Activated CD4-positive, alpha-beta T cell treated with anti-CD3 and anti-CD28 coated beads, Interleukin-2, amount 10 ng/mL, durations not matched to agents 24 days and 14 days (primary cell): ENCODE measurements at regions of chr1 and their contacts with region 1.

Region 1: DNA sequence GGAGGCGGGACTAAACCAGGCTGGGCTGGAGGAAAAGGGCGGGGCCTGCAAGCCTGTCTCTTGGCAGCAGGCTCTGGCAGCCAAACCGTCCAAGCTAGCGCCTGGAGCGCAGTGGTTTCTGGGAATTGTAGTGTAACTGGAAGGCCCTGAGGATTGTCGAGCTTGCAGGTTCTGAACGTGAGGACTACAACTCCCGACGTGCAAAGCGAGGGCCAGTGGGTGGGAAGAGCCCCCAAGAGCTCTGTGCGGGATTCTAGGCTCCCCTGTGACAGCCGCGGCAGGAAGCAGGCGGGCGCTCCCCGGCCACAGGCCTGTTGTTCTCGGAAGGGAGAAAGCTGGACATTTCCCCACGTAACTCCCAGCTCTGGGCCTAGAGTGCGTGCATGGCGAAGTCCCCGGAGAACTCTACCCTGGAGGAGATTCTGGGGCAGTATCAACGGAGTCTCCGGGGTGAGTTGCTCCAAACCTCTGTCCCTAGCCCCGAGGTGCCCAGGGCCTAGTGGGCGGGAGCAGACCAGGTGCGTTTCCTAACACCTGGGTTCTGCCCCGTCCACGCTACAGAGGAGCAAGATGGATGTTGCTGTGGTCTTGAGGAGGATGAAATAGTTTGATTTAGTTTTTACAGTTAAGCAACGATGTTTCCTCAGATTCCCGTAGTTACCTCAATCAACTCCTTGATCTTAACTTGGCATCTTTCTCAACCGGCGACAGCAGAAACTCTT is at the start of gene SDCCAG8:
- DNase-seq: peak; percentile 98
- H3K4me3 Mint-ChIP-seq: peak within 1 kb of the TSS; percentile 89
- H3K27ac Mint-ChIP-seq: peak within 1 kb of the TSS; percentile 100
- H3K4me1 Mint-ChIP-seq: peaks cover 36% of the 10 kb centered on the region
- H3K27me3 Mint-ChIP-seq: no peaks in the 10 kb centered on the region
- total RNA-seq, gene SDCCAG8: 16.5 and 23.6 TPM in 2 replicates

Region 2: GRCh38 chr1:241519308-241520079 is 1736.5 kb before region 1 on chr1 and contains the start of gene FH:
- intact Hi-C with region 1: loop called (anchors 10 kb)
- DNase-seq: peak; percentile 98
- H3K4me3 Mint-ChIP-seq: no peak within 1 kb of the TSS
- H3K27ac Mint-ChIP-seq: peak within 1 kb of the TSS; percentile 87
- H3K4me1 Mint-ChIP-seq: peaks cover 23% of the 10 kb centered on the region
- H3K27me3 Mint-ChIP-seq: peaks cover 27% of the 10 kb centered on the region
- total RNA-seq, gene FH: 98.6 and 103 TPM in 2 replicates

Region 3: DNA sequence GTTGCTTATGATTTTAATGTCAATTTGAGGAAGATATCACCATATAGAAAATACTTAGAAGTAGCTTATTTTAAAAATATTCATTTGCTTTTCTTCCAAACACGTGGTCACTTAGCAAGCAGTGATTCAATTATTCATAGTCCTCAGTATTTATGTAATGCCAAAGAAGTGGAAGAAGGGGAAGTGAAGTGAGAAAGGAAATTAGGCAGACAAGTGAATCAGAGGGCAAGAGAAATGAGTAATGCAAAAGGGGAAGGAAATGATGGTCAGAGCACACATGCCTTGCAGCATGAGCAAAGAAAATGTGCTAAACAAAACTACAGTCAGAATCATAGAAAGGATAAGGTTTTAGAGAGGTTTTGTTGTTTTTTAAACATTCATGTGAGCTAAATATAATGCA is 31.7 kb after region 1 on chr1:
- intact Hi-C with region 1: loop called (anchors 1 kb)
- DNase-seq: no peak
- H3K4me3 Mint-ChIP-seq: peak overlapping the region; percentile 32
- H3K27ac Mint-ChIP-seq: peak overlapping the region; percentile 60
- H3K4me1 Mint-ChIP-seq: peaks cover 17% of the 10 kb centered on the region
- H3K27me3 Mint-ChIP-seq: no peaks in the 10 kb centered on the region

Region 4: DNA sequence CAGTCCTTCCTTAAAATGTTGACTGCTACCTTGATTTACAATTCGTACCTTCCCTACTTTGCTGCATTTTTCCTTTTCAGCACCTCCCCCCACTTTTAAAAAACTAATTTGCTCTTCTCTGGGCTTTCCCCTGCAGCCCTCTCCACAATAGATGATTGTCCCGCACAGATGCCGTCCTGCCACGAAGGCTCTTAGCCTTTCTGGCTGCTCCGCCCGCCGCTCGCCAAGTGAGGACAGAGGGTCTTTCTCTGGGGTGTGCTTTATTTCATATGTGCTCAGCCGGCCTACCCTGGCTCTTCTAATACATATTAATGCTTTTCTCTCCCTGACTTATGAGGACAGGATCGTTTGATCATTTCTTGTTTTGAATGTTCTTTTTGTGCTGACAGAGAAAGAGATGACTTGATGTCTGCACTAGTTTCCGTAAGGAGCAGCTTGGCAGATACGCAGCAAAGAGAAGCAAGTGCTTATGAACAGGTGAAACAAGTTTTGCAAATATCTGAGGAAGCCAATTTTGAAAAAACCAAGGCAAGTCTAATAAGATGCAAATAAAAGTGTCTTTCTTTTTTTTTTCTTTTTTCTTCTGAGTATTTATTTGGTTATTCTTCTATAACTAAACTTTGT is 60.5 kb after region 1 on chr1:
- intact Hi-C with region 1: no loop called
- DNase-seq: no peak
- H3K4me3 Mint-ChIP-seq: no peak overlapping the region
- H3K27ac Mint-ChIP-seq: no peak overlapping the region
- H3K4me1 Mint-ChIP-seq: peaks cover 6% of the 10 kb centered on the region
- H3K27me3 Mint-ChIP-seq: no peaks in the 10 kb centered on the region

Region 5: DNA sequence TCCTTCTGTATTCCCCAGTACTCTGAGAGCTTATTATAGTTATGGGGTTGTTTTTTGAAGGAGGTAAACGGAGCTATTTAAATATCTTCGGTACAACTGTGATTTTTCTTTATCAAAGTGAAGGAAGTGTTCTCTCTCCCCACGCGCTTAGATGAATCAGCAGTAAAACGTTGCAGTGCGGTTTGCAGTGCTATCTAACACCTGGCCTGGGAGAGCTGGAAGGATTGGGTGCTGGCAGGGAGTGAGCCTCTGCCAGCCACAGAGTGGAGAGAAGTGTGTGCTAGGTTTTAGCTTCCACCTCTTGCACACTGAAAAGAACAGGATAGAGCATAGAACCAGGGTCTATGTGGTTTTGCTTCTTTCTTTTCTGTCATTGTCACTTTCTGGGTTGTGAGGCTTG is 165.8 kb after region 1 on chr1:
- intact Hi-C with region 1: loop called (anchors 1 kb)
- DNase-seq: peak; percentile 89
- H3K4me3 Mint-ChIP-seq: peak overlapping the region; percentile 70
- H3K27ac Mint-ChIP-seq: peak overlapping the region; percentile 55
- H3K4me1 Mint-ChIP-seq: peaks cover 38% of the 10 kb centered on the region
- H3K27me3 Mint-ChIP-seq: no peaks in the 10 kb centered on the region

Region 6: DNA sequence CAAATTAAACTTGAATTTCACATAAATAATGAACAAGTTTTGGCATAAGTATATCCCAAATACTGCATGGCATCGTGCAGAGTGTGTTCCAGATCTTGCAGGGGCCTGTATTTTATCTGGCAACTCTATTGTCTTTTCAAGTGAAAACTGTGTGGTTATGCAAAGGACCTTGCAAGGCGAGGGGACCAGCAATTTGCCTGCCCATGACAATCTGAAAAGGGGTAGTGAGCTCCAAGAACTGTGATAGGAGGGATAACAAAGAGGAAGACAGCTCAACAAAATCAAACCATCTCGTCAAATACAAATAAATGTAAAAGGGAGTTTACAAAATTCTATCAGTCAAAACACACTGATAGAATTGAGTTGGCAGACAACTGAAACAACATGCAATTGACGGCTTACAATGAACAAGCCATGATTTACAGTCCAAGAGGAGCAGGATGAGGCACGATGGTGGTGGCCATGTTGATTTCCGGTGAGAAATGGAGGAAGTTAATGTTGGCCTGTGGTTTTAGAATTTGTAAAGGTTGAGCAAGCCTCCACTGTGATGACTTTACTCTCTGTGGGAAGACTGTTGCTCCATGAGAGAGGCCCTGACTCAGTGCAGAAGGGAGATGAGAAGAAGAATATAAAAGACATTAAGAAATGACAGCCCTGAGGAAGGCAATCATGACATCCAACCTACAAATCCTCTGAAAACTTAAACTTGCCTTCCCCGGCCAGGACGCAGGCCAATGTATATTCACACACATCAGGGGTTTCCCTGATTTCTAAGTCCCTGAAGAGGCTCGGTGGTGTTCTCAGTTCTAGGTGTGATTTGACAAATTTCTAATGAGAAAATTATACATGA is 1063.6 kb after region 1 on chr1:
- intact Hi-C with region 1: loop called (anchors 10 kb)
- DNase-seq: peak; percentile 85
- H3K4me3 Mint-ChIP-seq: peak overlapping the region; percentile 60
- H3K27ac Mint-ChIP-seq: peak overlapping the region; percentile 84
- H3K4me1 Mint-ChIP-seq: peaks cover 43% of the 10 kb centered on the region
- H3K27me3 Mint-ChIP-seq: no peaks in the 10 kb centered on the region

Region 7: DNA sequence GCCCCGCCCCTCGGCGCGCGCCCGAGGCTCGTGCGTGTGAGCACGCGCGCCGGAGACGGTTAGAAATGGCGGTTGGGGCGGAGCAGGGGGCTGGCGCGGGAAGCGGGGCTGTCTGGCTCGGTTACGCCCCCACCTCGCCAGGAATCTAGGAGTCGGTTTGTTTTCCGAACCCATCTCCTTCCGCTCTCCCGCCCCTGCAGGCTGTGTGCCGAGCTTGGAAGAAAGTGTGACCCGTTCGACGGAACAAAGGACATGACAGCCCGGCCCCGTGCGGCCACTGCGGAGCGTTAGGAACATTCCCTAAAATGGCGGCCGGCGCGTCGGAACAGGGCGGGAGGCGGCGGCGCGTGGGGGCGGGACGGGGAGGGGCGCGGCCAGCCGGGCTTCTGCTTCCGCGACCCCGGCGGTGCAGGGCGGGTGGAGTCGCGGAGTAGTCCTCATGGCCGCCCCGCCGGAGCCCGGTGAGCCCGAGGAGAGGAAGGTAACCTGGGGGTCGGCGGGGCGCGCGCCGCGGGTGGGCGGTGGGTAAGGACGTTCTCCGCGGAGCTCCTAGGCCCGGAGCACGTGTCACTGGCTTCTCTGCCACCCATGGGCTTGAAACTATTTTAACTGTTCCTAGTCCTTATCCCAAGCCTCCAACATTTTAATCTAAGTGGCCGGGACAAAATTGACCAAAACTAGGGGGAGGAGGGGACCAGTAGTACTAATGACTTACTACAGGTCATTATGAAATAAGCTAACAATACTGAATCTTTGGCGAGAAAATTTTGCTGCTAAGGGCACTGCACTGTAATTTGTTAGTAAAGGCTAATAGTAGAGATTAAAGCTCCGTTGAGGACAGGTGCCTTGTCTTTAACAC is 1579.6 kb after region 1 on chr1 and contains the start of gene COX20:
- intact Hi-C with region 1: loop called (anchors 1 kb)
- DNase-seq: peak; percentile 97
- H3K4me3 Mint-ChIP-seq: peak within 1 kb of the TSS; percentile 91
- H3K27ac Mint-ChIP-seq: peak within 1 kb of the TSS; percentile 99
- H3K4me1 Mint-ChIP-seq: peaks cover 43% of the 10 kb centered on the region
- H3K27me3 Mint-ChIP-seq: no peaks in the 10 kb centered on the region
- total RNA-seq, gene COX20: 28.6 and 30.0 TPM in 2 replicates

Region 8: DNA sequence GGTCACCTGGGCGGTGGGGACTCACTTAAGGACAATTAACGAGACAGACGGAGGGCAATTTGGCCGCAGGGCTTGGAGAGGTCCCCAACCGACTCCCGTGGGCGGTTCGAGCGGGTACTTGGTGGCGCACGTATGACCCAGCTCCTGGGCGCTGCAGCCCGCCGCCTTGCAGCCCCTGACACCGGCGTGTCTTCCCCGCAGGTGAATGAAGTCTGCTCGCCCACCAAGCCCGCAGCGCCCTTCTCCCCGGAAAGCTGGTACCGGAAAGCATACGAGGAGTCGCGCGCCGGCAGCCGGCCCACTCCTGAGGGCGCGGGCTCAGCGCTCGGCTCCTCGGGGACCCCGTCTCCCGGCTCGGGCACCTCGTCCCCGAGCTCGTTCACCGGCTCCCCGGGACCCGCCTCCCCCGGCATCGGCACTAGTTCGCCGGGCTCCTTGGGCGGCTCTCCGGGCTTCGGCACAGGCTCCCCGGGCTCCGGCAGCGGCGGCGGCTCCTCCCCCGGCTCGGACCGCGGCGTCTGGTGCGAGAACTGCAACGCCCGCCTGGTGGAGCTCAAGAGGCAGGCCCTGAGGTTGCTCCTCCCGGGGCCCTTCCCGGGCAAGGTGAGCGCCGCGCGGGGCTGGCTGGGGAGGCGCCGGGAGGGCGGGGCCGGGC is 1900.3 kb after region 1 on chr1:
- intact Hi-C with region 1: loop called (anchors 10 kb)
- DNase-seq: peak; percentile 95
- H3K4me3 Mint-ChIP-seq: peak overlapping the region; percentile 84
- H3K27ac Mint-ChIP-seq: no peak overlapping the region
- H3K4me1 Mint-ChIP-seq: peaks cover 13% of the 10 kb centered on the region
- H3K27me3 Mint-ChIP-seq: peaks cover 65% of the 10 kb centered on the region